ENCODE measurements at regions of chr9 and their contacts with region 1.

Region 1: DNA sequence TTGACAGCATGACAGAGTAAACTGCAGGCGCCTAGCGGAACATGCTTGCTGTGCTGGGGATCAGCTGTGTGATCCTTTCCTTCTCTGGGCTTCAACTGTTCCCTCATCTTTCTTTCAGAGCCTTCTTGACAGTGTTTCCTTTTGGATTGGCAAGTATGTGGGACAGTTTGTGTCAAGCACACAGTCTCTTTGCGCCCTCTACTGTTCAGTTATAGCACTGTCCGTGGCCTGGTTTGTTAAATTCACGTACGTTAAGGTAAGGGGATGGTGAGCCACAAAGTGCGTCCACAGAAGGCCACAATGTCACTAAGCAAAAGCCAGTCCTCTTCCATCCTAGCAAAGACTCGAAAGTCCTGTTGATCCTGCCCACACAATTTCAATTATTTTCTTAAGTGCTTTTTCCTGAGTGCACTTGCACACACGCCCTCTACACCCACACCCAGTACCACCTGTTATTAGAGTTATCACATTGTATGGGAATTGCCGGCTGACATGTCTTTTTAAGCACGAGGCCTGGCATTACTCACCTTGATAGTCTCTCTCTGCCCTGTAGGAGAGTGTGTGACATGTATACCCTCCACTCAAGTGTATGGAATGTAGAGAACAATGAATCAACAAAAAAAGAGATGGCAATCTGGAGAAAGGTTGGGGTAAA is 22.5 kb upstream of the PTPN3 start:
- DNase-seq: peak; percentile 75
- ATAC-seq: peak; percentile 96
- H3K4me3 ChIP-seq: no peak overlapping the region
- H3K27ac ChIP-seq: no peak overlapping the region
- H3K4me1 ChIP-seq: no peaks in the 10 kb centered on the region
- H3K27me3 ChIP-seq: no peaks in the 10 kb centered on the region
- CTCF ChIP-seq: peak; percentile 90

Region 2: GRCh38 chr9:109440797-109441287 is 79.8 kb before region 1 on chr9:
- CTCF ChIA-PET with region 1: no interaction called
- POLR2A ChIA-PET with region 1: no interaction called
- in situ Hi-C with region 1: no loop called
- intact Hi-C with region 1: loop called (anchors 2 kb)
- DNase-seq: peak; percentile 51
- ATAC-seq: peak; percentile 91
- H3K4me3 ChIP-seq: no peak overlapping the region
- H3K27ac ChIP-seq: no peak overlapping the region
- H3K4me1 ChIP-seq: no peaks in the 10 kb centered on the region
- H3K27me3 ChIP-seq: no peaks in the 10 kb centered on the region
- CTCF ChIP-seq: peak; percentile 80

Region 3: GRCh38 chr9:109640580-109641371 is 120.2 kb after region 1 on chr9:
- CTCF ChIA-PET with region 1: no interaction called
- POLR2A ChIA-PET with region 1: no interaction called
- in situ Hi-C with region 1: no loop called
- intact Hi-C with region 1: no loop called
- DNase-seq: no peak
- ATAC-seq: peak; percentile 48
- H3K4me3 ChIP-seq: peak overlapping the region; percentile 22 to 36; a peak in 3 of 4 replicates
- H3K27ac ChIP-seq: no peak overlapping the region
- H3K4me1 ChIP-seq: no peaks in the 10 kb centered on the region
- H3K27me3 ChIP-seq: peaks cover 5% of the 10 kb centered on the region
- CTCF ChIP-seq: no peak